ENCODE measurements at regions of chr3 and their contacts with region 1.

Region 1: GRCh38 chr3:33113772-33114621 is at the start of gene CRTAP:
- DNase-seq: peak; percentile 95 to 98
- ATAC-seq: peak; percentile 95 to 97 (median 96)
- H3K4me3 ChIP-seq: peak within 1 kb of the TSS; percentile 20 to 93 (median 84)
- H3K27ac ChIP-seq: peak within 1 kb of the TSS; percentile 87 to 98 (median 96)
- H3K4me1 ChIP-seq: peaks cover 0 to 50% (median 14%) of the 10 kb centered on the region in 9 donors
- H3K27me3 ChIP-seq: no peaks in the 10 kb centered on the region
- CTCF ChIP-seq: peak in 1 of 9 donors; percentile 29
- total RNA-seq, gene CRTAP: 72.8 to 120 (median 88.4) TPM

Region 2: DNA sequence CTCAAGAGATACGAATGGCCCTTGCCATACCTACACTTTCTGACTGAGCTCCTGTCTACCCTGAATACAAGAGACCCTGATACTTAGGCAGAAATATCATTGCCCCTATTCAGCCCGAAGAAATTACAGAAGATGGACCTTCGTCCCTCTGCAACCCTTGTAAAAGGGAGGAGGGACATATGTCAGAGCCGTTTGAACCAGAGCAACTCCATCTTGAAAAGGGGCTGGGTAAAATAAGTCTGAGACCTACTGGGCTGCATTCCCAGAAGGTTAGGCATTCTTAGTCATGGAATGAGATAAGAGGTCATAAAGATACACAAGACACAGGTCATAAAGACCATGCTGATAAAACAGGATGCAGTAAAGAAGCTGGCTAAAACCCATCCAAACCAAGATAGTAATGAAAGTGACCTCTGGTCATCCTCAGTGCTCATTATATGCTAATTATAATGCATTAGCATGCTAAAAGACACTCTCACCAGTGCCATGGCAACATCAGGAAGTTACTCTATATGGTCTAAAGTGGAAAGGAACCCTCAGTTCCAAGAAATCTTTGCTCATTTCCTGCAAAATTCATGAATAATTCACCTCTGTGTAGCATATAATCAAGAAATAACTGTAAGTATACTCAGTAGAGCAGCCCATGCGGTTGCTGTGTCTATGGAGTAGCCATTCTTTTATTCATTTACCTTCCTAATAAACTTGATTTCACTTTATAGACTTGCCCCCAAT is 1057.3 kb before region 1 on chr3:
- intact Hi-C with region 1: no loop called
- DNase-seq: no peak
- ATAC-seq: no peak
- H3K4me3 ChIP-seq: no peak overlapping the region
- H3K27ac ChIP-seq: no peak overlapping the region
- H3K4me1 ChIP-seq: no peaks in the 10 kb centered on the region
- H3K27me3 ChIP-seq: no peaks in the 10 kb centered on the region
- CTCF ChIP-seq: no peak

Region 3: GRCh38 chr3:32510075-32510724 is 603.8 kb before region 1 on chr3:
- intact Hi-C with region 1: no loop called
- DNase-seq: peak in 1 of 2 donors; percentile 78
- ATAC-seq: peak; percentile 84 to 96 (median 94)
- H3K4me3 ChIP-seq: no peak overlapping the region
- H3K27ac ChIP-seq: no peak overlapping the region
- H3K4me1 ChIP-seq: peaks cover 0 to 7% (median 0%) of the 10 kb centered on the region in 9 donors
- H3K27me3 ChIP-seq: no peaks in the 10 kb centered on the region
- CTCF ChIP-seq: peak; percentile 49 to 88 (median 77)

Region 4: DNA sequence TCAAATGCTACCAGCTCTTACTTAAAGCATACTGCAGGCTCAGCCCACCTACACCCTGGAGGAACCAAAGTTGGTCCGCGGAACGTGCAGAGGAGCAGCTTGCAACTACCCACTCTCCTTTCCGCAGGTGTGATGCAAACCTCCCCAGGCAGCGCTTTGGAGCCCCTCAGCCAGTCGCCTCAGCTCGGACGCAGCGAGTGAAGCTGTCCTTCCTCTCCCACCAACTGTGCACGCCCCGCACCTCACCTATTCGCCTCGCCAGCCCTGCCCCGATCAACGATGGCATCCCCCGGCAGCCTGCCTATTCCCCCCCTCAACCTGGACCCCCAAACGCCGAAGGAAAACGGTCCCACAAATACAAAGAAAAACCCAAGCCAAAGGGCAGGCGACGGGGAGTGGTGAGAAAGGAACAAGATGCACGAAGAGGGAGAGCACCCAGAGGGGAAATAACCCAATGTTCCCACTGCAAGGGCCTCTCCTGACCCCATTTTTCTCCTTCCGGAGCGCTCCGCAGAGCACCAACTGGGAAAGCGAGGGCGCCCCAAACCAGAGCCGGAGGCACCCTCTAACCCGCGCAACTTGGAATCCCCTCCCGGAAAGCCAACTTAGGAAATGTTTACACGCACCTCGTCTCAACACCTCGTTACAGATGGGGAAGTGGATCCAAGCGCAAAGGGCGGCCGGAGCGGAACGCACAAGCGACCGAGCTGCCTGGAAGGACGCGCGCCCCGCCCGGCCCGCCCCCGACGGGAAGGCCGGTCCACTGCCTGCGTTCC is 17.7 kb before region 1 on chr3:
- intact Hi-C with region 1: loop called in 2 of 10 experiments (anchors 1 to 2 kb)
- DNase-seq: peak in 1 of 2 donors; percentile 35
- ATAC-seq: peak; percentile 43 to 69 (median 60)
- H3K4me3 ChIP-seq: peak overlapping the region; percentile 79 to 100 (median 99)
- H3K27ac ChIP-seq: peak overlapping the region; percentile 91 to 100 (median 97)
- H3K4me1 ChIP-seq: peaks cover 0 to 34% (median 22%) of the 10 kb centered on the region in 9 donors
- H3K27me3 ChIP-seq: no peaks in the 10 kb centered on the region
- CTCF ChIP-seq: no peak

Region 5: DNA sequence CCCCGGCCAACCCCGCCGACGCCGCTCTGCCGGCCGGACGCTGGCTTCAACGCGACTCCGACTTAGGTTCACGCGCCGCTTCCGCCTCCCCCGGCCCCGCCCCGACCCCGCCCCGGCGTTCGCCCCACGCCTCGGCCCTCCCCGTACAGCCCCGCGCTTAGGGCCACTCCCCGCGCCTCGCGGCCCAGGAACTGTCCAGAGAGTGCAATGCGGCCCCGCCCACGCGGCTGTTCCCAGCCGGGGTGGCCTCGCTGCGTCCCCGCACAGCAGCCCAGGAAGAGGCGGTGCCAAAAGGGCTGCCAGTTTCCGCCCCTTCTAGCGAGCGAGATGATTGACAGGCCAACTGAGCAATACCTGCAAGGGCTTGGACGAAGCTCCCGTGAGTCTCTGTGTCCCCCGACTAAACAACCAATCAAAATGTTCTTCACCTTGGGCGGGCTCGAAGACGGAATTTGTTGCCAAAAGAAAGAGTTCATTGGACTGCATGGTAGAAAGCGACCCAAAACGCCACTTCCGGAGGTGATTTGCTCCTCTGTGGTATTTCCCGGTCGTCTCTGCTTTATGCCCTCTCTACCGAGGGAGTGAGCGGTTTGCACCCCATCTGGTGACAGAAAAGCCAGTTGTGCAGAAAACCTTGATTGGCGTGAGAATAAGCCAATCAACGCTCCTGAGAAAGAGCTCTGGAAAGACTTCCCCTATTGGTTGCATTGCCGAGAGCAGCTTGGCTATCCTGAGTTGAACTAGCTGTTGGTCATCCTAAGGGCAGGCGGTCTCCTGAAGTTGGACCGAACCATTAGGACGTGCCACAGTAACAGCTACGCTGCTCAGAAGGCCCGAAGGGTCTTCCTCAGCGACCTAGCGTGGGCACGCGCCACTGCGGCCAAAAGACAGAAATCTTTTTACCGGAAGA is 326.6 kb after region 1 on chr3 and contains the start of gene UBP1:
- intact Hi-C with region 1: loop called in 1 of 10 experiments (anchors 10 kb)
- DNase-seq: peak; percentile 99 to 100
- ATAC-seq: peak; percentile 92 to 99 (median 97)
- H3K4me3 ChIP-seq: peak within 1 kb of the TSS; percentile 71 to 89 (median 85)
- H3K27ac ChIP-seq: peak within 1 kb of the TSS; percentile 80 to 99 (median 95)
- H3K4me1 ChIP-seq: peaks cover 2 to 47% (median 39%) of the 10 kb centered on the region in 9 donors
- H3K27me3 ChIP-seq: no peaks in the 10 kb centered on the region
- CTCF ChIP-seq: peak in 3 of 9 donors; percentile 5 to 17 (median 9)
- total RNA-seq, gene UBP1: 33.2 to 51.7 (median 42.3) TPM

Region 6: GRCh38 chr3:33798411-33799201 is 684.6 kb after region 1 on chr3 and contains the start of gene PDCD6IP:
- intact Hi-C with region 1: loop called in 1 of 10 experiments (anchors 10 kb)
- DNase-seq: peak; percentile 92 to 94
- ATAC-seq: peak; percentile 93 to 98 (median 96)
- H3K4me3 ChIP-seq: peak within 1 kb of the TSS; percentile 59 to 96 (median 81)
- H3K27ac ChIP-seq: peak within 1 kb of the TSS; percentile 77 to 98 (median 94)
- H3K4me1 ChIP-seq: peaks cover 0 to 55% (median 39%) of the 10 kb centered on the region in 9 donors
- H3K27me3 ChIP-seq: no peaks in the 10 kb centered on the region
- CTCF ChIP-seq: peak in 4 of 9 donors; percentile 30 to 49 (median 33)
- total RNA-seq, gene PDCD6IP: 133 to 185 (median 157) TPM